Endothelial cell of umbilical vein (primary cell): ENCODE measurements at regions of chr22 and their contacts with region 1.

Region 1: DNA sequence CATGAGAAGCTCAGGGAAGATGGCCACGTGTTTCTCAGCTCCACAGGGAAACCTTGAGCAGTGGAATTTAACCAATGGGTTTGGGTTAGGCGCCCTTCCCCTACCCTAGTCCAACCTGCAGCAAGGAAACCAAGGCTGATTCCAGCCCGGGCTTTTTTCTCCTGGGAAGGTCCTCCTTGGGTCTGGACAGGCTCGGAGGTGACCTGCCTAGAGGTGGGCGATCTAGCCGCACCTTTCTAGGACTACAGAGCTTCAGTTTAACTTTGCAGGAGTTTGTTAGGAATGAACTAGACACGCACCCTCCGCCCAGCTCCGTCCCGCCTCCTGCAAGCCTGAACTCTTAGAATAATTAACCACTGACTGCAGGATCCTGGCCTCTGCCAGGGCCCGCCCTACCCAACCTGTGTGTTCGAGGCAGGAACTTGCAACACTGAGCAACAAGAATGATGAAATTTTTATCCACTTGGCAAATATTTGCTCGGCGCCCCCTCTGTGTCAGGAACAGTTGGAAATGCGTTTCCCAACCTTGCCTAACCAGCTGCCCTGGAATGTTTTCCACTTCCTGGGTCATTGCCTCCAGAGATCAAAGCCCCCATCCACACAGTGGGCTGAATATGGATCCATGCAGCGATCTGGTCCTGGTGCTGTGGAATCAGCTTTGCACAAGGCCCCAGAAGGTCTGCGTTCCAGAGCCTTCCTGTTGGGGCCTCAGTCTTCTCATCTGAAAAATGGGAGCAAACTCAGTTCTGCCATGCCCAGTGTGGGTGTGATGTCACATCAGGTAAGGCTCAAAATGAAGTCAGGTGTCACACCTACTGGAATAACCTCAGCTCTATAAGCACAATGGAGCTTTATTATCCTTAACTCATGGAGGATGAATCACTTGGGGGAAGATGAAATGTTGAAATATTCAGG is 13.3 kb downstream of the MPST start:
- DNase-seq: no peak
- H3K4me3 ChIP-seq: no peak overlapping the region
- H3K27ac ChIP-seq: no peak overlapping the region
- H3K4me1 ChIP-seq: peaks cover 9% of the 10 kb centered on the region
- H3K27me3 ChIP-seq: no peaks in the 10 kb centered on the region
- CTCF ChIP-seq: no peak
- POLR2A ChIP-seq: no peak

Region 2: GRCh38 chr22:37019309-37020125 is 13.3 kb before region 1 on chr22 and contains the starts of genes MPST and TST:
- CTCF ChIA-PET with region 1: interaction called, 57 read pairs
- POLR2A ChIA-PET with region 1: no interaction called
- dilution Hi-C with region 1: no loop called
- intact Hi-C with region 1: no loop called
- DNase-seq: peak; percentile 69
- H3K4me3 ChIP-seq: peak within 1 kb of the TSS; percentile 74 to 89 (median 86)
- H3K27ac ChIP-seq: peak within 1 kb of the TSS; percentile 91
- H3K4me1 ChIP-seq: peaks cover 12% of the 10 kb centered on the region
- H3K27me3 ChIP-seq: no peaks in the 10 kb centered on the region
- CTCF ChIP-seq: peak in 1 of 2 donors; percentile 8
- POLR2A ChIP-seq: peak; percentile 45
- total RNA-seq, gene MPST: 87.3 and 93.2 TPM in 2 replicates
- total RNA-seq, gene TST: 38.0 and 39.2 TPM in 2 replicates